ENCODE measurements at regions of chr7 and their contacts with region 1.

Region 1: DNA sequence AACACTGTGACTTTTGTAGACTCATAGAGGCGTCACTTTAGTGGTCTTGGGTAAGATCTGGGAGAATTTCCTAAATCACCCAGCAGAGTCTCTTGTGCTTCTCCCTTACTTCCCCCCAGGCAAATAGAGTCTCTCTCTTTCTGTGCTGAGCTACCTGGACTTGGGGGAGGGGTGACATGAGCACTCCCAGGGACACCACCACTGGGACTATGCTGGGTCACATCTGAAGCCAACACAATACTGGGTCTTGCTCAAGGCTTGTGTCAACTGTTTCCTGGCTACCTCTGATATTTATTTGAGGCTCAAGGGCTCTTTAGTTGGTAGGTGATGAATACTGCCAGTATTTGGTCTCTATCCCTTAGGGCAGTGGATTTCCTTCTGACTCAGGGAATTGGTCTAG is 214.6 kb upstream of the TPK1 start:
- DNase-seq: no peak
- ATAC-seq: no peak
- H3K4me3 ChIP-seq: no peak overlapping the region
- H3K4me3 Mint-ChIP-seq: no peak overlapping the region
- H3K27ac ChIP-seq: no peak overlapping the region
- H3K27ac Mint-ChIP-seq: no peak overlapping the region
- H3K4me1 ChIP-seq: no peaks in the 10 kb centered on the region
- H3K4me1 Mint-ChIP-seq: no peaks in the 10 kb centered on the region
- H3K27me3 ChIP-seq: no peaks in the 10 kb centered on the region
- H3K27me3 Mint-ChIP-seq: peaks cover 6% of the 10 kb centered on the region
- CTCF ChIP-seq: no peak

Region 2: GRCh38 chr7:144997512-144997911 is 52.9 kb before region 1 on chr7:
- CTCF ChIA-PET with region 1: no interaction called
- POLR2A ChIA-PET with region 1: interaction called, 11 read pairs
- intact Hi-C with region 1: no loop called
- DNase-seq: no peak
- ATAC-seq: no peak
- H3K4me3 ChIP-seq: no peak overlapping the region
- H3K4me3 Mint-ChIP-seq: no peak overlapping the region
- H3K27ac ChIP-seq: no peak overlapping the region
- H3K27ac Mint-ChIP-seq: no peak overlapping the region
- H3K4me1 ChIP-seq: no peaks in the 10 kb centered on the region
- H3K4me1 Mint-ChIP-seq: peaks cover 9% of the 10 kb centered on the region
- H3K27me3 ChIP-seq: no peaks in the 10 kb centered on the region
- H3K27me3 Mint-ChIP-seq: no peaks in the 10 kb centered on the region
- CTCF ChIP-seq: no peak

Region 3: GRCh38 chr7:145030754-145031153 is 19.7 kb before region 1 on chr7:
- CTCF ChIA-PET with region 1: no interaction called
- POLR2A ChIA-PET with region 1: no interaction called
- intact Hi-C with region 1: no loop called
- DNase-seq: no peak
- ATAC-seq: no peak
- H3K4me3 ChIP-seq: no peak overlapping the region
- H3K4me3 Mint-ChIP-seq: no peak overlapping the region
- H3K27ac ChIP-seq: no peak overlapping the region
- H3K27ac Mint-ChIP-seq: no peak overlapping the region
- H3K4me1 ChIP-seq: no peaks in the 10 kb centered on the region
- H3K4me1 Mint-ChIP-seq: no peaks in the 10 kb centered on the region
- H3K27me3 ChIP-seq: no peaks in the 10 kb centered on the region
- H3K27me3 Mint-ChIP-seq: peaks cover under 1% of the 10 kb centered on the region
- CTCF ChIP-seq: no peak

Region 4: DNA sequence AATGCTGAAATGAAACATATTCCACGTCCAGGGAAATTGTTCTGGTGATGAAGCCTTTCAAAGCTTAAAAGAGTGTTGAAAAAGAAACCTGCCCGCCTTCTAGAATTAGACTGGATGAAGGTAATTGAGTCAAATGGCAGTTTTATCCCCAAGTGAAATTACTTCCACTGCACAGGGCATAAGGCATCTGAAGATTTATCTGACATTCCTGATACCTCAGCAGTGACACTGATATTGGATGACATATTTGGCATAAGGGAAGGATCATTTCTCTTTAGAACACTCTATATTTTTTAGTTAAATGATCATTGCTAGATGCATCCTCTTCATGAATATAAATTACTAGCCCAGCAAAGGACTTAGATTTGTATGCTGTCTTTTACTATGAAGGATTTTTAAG is 15.1 kb after region 1 on chr7:
- CTCF ChIA-PET with region 1: no interaction called
- POLR2A ChIA-PET with region 1: no interaction called
- intact Hi-C with region 1: no loop called
- DNase-seq: no peak
- ATAC-seq: no peak
- H3K4me3 ChIP-seq: no peak overlapping the region
- H3K4me3 Mint-ChIP-seq: no peak overlapping the region
- H3K27ac ChIP-seq: no peak overlapping the region
- H3K27ac Mint-ChIP-seq: no peak overlapping the region
- H3K4me1 ChIP-seq: no peaks in the 10 kb centered on the region
- H3K4me1 Mint-ChIP-seq: no peaks in the 10 kb centered on the region
- H3K27me3 ChIP-seq: no peaks in the 10 kb centered on the region
- H3K27me3 Mint-ChIP-seq: no peaks in the 10 kb centered on the region
- CTCF ChIP-seq: no peak

Region 5: DNA sequence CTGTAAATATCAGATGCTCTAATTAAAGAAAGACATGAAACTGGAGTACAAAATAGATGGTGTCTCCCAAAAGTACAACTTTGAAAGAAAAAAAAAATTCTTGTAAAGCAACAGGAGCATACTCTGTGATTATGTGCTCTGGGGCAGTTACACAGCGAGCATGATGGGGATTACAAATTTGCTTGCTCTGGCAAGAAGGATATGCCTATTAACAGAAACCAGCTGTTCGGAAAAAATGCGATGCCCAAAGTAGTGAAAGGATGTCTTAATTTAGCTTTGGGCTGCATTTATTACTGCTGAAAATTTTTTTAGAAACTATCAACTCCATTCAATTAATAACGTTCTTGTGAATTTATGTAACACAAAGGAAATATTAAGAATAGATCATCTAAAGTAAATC is 42.4 kb after region 1 on chr7:
- CTCF ChIA-PET with region 1: no interaction called
- POLR2A ChIA-PET with region 1: no interaction called
- intact Hi-C with region 1: no loop called
- DNase-seq: no peak
- ATAC-seq: no peak
- H3K4me3 ChIP-seq: no peak overlapping the region
- H3K4me3 Mint-ChIP-seq: no peak overlapping the region
- H3K27ac ChIP-seq: no peak overlapping the region
- H3K27ac Mint-ChIP-seq: no peak overlapping the region
- H3K4me1 ChIP-seq: no peaks in the 10 kb centered on the region
- H3K4me1 Mint-ChIP-seq: no peaks in the 10 kb centered on the region
- H3K27me3 ChIP-seq: no peaks in the 10 kb centered on the region
- H3K27me3 Mint-ChIP-seq: peaks cover 4% of the 10 kb centered on the region
- CTCF ChIP-seq: no peak